Mammary epithelial cell (primary cell): ENCODE measurements at regions of chr21 and their contacts with region 1.

Region 1: DNA sequence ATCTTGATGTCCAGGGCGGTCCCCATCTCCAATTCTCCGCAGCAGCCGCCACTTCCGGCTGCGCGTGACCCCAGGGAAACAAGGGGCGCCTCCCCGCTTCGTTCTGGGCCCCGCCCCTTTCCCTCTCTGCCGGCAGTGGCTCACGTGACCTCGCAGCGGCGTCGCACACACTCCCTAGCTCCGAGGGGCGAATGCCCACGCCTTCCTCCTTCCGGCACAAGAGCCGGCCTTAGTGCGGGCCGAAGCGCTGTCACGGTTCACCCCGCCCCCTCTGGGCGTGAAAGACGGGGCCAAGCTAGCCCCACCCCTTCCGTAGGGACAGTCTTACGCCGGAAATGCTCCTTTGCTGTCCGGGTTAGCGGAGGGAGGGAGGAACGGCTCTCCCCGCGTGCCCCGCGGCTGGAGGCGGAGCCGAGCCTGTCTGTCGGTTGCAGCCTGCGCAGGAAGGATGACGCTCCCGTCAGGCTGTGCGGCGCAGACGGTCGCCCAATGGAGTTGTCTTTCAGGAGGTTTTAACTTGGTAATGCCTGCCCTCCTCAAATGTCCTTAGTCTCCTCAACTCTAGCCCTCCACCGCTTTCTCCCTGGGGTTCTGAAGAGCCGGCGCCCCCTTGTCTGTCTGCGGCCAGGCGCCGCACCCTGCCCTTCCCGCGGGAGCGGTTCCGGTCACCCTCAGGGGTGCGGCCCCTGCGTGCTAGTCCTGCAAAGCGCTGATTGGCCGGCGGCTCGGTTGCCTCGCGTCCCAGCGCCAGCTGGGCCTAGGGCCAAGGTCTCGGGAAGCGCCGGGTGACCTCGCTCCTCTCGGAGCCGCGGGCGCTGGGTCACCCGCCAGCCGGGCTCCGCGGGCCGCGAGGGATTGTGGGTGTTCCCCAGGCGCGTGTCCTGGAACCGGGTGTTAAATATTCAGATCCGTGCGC is at the start of gene VPS26C:
- DNase-seq: peak; percentile 100
- H3K4me3 ChIP-seq: peak within 1 kb of the TSS; percentile 61 to 80 (median 80)
- H3K27ac ChIP-seq: peak within 1 kb of the TSS; percentile 99
- H3K4me1 ChIP-seq: peaks cover 22% of the 10 kb centered on the region
- H3K27me3 ChIP-seq: no peaks in the 10 kb centered on the region
- CTCF ChIP-seq: no peak
- total RNA-seq, gene VPS26C: 46.2 to 54.8 TPM

Region 2: DNA sequence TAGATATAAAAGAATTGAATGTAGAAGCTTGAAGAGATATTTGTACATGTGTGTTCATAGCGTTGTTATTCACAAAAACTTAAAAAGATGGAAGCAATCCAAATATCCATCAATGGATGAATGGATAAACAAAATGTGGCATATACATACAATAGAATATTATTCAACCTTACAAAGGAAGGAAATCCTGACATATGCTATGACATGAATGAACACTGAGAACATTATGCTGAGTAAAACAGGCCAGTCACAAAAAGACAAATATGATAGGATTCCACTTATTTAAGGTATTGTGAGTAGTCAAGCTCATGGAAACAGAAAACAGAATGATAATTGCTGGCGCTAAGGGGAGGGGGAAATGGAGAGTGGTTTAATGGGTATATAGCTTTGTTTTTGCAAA is 52.0 kb after region 1 on chr21:
- CTCF ChIA-PET with region 1: no interaction called
- dilution Hi-C with region 1: no loop called
- in situ Hi-C with region 1: no loop called
- intact Hi-C with region 1: no loop called
- DNase-seq: no peak
- H3K4me3 ChIP-seq: no peak overlapping the region
- H3K27ac ChIP-seq: no peak overlapping the region
- H3K4me1 ChIP-seq: no peaks in the 10 kb centered on the region
- H3K27me3 ChIP-seq: no peaks in the 10 kb centered on the region
- CTCF ChIP-seq: no peak

Region 3: DNA sequence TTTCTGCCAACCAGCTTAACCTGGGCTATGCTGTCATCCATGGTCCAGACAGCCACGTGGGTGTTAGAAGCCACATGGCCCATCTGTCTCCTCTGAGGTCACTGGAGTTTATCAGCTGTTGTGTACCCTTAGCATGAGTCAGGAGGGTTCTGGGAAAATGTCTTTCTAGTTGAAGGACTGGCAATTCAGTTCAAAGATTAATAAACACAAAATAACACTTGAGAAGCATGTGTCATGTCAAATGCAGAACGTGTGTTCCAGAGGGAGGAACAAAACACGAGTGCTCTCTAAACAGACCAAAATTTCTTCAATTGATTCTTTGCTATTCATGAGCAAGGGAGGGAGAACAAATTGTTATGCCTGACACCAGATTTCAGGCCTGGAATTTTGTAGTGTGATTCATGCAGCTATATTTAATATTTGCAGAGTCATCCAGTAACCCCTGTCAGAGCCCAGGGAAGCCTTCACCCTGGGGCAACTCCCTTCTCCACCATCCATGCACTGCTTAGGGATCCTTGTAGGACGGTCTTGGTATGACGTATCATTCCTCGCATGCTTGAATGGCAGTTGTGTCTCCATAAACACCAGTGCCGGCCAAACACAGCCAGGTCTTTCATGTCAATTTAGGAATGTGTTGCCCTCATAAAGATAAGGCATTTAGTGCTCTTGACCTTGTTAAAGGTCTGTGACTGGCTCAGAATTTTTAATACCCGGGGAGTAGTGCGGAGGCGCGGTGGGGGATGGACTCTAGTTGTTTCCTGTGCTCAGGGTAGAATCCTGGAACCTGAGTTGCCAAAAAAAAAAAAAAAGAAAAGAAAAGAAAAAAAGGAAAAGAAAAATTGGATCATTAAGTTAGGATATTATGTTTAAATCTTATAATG is 71.4 kb after region 1 on chr21:
- CTCF ChIA-PET with region 1: no interaction called
- dilution Hi-C with region 1: no loop called
- in situ Hi-C with region 1: no loop called
- intact Hi-C with region 1: loop called (anchors 1 kb)
- DNase-seq: peak; percentile 89
- H3K4me3 ChIP-seq: no peak overlapping the region
- H3K27ac ChIP-seq: peak overlapping the region; percentile 88
- H3K4me1 ChIP-seq: peaks cover 36% of the 10 kb centered on the region
- H3K27me3 ChIP-seq: no peaks in the 10 kb centered on the region
- CTCF ChIP-seq: no peak

Region 4: DNA sequence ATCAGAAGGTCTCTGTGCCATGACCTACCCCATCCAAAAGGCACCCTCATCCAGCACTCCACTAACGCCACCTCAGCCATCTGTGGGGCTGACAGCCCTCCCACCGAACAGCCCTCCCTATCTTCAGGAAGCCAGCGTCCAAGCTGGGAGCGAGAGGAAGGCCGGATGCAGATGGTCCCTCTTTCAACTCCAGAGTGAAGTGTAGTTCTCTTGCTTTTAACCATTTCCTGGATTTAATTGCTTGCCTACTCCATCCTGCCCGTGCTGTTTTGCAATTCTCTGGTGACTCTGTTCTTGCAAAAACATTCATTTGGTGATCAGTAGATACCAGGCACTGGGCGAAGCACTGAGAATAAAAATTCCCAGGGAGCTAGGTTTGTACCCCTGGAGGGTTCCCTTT is 90.9 kb after region 1 on chr21:
- CTCF ChIA-PET with region 1: no interaction called
- dilution Hi-C with region 1: no loop called
- in situ Hi-C with region 1: loop called (anchors 10 to 25 kb)
- intact Hi-C with region 1: no loop called
- DNase-seq: peak; percentile 34
- H3K4me3 ChIP-seq: no peak overlapping the region
- H3K27ac ChIP-seq: no peak overlapping the region
- H3K4me1 ChIP-seq: peaks cover 19% of the 10 kb centered on the region
- H3K27me3 ChIP-seq: no peaks in the 10 kb centered on the region
- CTCF ChIP-seq: no peak

Region 5: GRCh38 chr21:37463083-37463801 is 195.7 kb after region 1 on chr21:
- CTCF ChIA-PET with region 1: no interaction called
- dilution Hi-C with region 1: no loop called
- in situ Hi-C with region 1: no loop called
- intact Hi-C with region 1: loop called (anchors 10 kb)
- DNase-seq: peak; percentile 66
- H3K4me3 ChIP-seq: peak overlapping the region; percentile 4 to 47 (median 26)
- H3K27ac ChIP-seq: peak overlapping the region; percentile 64
- H3K4me1 ChIP-seq: peaks cover 8% of the 10 kb centered on the region
- H3K27me3 ChIP-seq: no peaks in the 10 kb centered on the region
- CTCF ChIP-seq: peak; percentile 72 to 76